Sigmoid colon (tissue), 7 donors: ENCODE measurements at regions of chr17 and their contacts with region 1.

Region 1: DNA sequence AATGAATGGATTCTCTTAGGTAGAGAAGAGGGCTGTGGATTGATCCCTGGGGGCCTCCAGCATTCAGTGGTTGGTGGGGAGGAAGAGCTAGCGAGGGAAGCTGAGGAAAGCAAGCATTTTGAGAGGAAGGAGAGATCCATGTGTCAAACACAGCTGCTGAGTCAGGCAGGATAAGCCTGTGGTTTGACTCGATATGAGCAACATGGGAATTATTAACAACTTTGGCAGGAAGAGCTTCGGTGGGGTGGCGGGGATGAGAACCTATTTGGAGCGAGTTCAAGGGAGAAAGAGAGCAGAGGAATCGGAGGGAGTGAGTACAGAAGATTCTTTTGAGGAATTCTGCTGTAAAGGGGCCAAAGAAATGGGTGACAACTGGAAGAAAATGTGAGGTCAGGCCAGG is 59.5 kb upstream of the CDC42EP4 start:
- DNase-seq: no peak
- H3K4me3 ChIP-seq: no peak overlapping the region
- H3K27ac ChIP-seq: no peak overlapping the region
- H3K4me1 ChIP-seq: peaks cover 0 to 16% (median 8%) of the 10 kb centered on the region in 4 donors
- H3K27me3 ChIP-seq: no peaks in the 10 kb centered on the region
- CTCF ChIP-seq: no peak
- EP300 ChIP-seq: no peak
- POLR2A ChIP-seq: no peak

Region 2: DNA sequence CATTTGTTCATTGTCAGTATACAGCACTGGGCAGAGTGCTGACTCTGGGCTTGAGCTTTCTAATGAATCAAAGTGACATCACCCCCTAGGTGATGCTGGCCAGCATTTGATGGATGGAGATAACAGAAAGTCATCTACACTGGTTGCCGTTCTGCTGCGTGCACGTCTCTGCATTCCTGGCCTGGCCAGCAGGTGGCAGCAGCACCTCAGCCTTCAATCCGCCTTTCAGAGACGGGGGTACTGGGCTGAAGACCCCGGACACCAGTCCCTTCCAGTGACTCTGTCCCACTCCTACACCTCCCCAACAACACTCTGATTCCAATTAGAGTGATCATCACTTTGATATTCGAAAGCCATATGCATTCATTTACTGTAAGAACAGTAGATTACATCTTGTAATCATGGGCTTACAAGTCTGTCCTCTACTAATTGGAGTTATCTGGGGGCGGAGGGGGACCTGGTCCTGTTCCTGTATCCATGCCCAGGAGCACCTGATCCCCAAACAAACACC is 115.6 kb before region 1 on chr17:
- intact Hi-C with region 1: loop called (anchors 1 kb)
- DNase-seq: no peak
- H3K4me3 ChIP-seq: no peak overlapping the region
- H3K27ac ChIP-seq: peak overlapping the region in 2 of 4 donors; percentile 4 to 6
- H3K4me1 ChIP-seq: peaks cover 0 to 18% (median 13%) of the 10 kb centered on the region in 4 donors
- H3K27me3 ChIP-seq: no peaks in the 10 kb centered on the region
- CTCF ChIP-seq: peak; percentile 98 to 100 (median 98)
- EP300 ChIP-seq: no peak
- POLR2A ChIP-seq: no peak